CD4-positive, alpha-beta memory T cell (primary cell): ENCODE measurements at regions of chr9 and their contacts with region 1.

Region 1: DNA sequence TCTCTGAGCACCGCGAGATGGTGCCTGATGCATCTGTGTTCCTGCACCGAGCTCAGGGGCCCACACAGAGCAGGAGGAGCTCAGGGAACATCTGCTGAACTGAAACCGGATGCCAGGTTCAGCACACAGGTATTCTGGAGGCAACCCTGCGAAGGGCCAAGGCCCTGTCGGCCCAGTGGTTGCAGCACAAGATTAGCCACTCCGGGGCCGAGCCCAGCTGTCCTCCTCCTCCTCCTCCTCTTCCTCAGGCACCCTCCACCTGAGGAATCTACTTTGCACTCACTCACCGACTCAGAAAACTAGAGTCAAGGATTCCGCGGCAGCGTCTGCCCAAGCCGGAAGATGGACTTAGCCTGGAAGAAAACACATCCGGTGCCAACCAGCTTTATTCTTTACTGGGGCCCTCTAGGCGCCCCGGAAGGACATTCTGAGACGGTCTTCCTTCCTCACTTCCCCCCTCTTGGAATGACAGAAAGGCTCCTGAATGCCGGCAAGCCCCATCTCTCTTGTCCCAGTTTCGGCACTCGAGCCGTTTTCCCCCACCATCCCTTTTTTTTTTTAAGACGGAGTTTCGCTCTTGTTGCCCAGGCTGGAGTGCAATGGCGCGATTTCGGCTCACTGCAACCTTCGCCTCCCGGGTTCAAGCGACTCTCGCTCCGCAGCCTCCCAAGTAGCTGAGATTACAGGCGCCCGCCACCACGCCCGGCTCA is at the start of gene ZBTB6:
- DNase-seq: peak; percentile 77 to 92 (median 80)
- H3K4me3 ChIP-seq: peak within 1 kb of the TSS; percentile 95 to 96
- H3K4me3 Mint-ChIP-seq: peak within 1 kb of the TSS; percentile 93 to 99 (median 98)
- H3K27ac ChIP-seq: peak within 1 kb of the TSS; percentile 86
- H3K27ac Mint-ChIP-seq: peak within 1 kb of the TSS; percentile 89 to 99 (median 99)
- H3K4me1 ChIP-seq: peaks cover 24% of the 10 kb centered on the region
- H3K4me1 Mint-ChIP-seq: peaks cover 21 to 36% (median 26%) of the 10 kb centered on the region in 4 donors
- H3K27me3 ChIP-seq: no peaks in the 10 kb centered on the region
- H3K27me3 Mint-ChIP-seq: no peaks in the 10 kb centered on the region
- total RNA-seq, gene ZBTB6: 20.2 to 20.5 TPM

Region 2: DNA sequence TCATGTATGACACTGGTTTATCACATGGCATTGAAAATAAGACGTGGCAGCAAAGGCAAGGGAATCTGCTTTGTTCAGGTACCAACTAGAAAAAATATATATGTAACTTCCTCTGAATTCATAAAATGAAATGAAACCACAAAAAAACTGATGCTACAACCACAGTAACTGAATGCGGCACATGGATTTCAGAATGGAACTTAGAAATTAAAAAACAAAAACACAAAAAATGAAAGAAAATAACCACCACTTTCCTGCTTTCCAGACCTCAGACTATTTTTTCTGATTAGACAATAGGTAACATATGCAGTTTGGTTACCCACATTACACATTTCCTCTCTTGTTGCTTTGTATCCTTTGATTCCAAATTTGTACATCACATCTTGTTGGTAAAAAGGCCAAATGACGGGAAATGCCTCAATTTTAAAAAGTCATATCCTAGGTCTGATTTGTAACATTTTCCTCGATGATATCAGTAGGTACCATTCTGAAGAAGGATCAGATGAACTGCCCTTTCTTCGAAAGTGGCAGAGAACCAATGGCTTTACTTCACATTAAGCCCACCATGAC is 66.7 kb before region 1 on chr9:
- CTCF ChIA-PET with region 1: no interaction called
- POLR2A ChIA-PET with region 1: no interaction called
- intact Hi-C with region 1: no loop called
- DNase-seq: peak; percentile 27 to 70 (median 56)
- H3K4me3 ChIP-seq: no peak overlapping the region
- H3K4me3 Mint-ChIP-seq: peak overlapping the region in 5 of 8 donors; percentile 18 to 55 (median 27)
- H3K27ac ChIP-seq: peak overlapping the region; percentile 9
- H3K27ac Mint-ChIP-seq: peak overlapping the region; percentile 44 to 95 (median 79)
- H3K4me1 ChIP-seq: peaks cover 21% of the 10 kb centered on the region
- H3K4me1 Mint-ChIP-seq: peaks cover 14 to 29% (median 25%) of the 10 kb centered on the region in 4 donors
- H3K27me3 ChIP-seq: no peaks in the 10 kb centered on the region
- H3K27me3 Mint-ChIP-seq: no peaks in the 10 kb centered on the region

Region 3: DNA sequence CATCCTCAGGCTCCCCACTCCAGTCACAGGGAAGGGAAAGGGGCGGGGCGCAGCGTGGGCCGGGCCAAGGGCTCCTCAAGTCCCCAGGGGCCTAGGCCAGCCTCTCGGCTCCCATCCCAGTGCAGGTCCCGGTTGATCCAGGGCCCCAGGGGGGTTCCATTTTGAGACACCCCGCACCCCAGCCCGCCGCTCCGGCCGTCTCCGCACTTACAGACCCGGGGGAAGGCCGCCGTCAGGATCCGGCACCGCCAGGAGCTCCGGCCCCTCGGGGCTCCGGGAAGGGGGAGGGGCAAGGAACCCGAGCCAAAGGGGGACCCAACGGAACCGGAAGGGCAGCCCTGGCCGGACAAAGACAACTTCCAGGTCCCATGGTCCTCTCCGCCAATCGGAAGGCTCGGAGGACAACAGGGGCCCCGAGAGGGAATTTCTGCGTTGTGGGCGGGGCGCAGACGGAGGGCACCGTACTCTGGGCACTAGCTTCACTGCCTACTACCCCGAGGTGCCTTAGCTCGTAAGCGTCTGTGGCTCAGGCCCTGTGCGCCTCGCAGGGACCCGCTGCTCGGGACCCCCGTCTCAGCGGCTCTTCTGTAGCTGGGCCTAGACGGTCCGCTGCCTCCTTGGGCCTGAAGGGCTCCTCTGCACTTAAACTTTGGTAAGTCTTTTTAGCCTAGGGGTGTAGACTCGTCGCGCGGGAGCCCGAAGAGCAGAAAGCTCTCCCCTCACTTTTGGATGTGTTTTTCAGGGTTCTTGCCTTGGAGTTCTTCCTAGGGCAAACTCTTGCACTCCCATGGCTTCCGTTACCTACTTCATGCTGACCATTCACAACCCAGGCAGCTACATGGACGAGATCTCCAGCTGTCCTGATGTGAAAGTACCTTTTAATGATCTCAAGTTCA is 18.4 kb after region 1 on chr9 and contains the start of gene ZBTB26:
- CTCF ChIA-PET with region 1: interaction called, 6 read pairs
- POLR2A ChIA-PET with region 1: interaction called, 80 read pairs
- intact Hi-C with region 1: loop called (anchors 1 kb)
- DNase-seq: peak; percentile 83 to 93 (median 86)
- H3K4me3 ChIP-seq: peak within 1 kb of the TSS; percentile 84 to 93
- H3K4me3 Mint-ChIP-seq: peak within 1 kb of the TSS in 1 of 8 donors; percentile 99
- H3K27ac ChIP-seq: peak within 1 kb of the TSS; percentile 94
- H3K27ac Mint-ChIP-seq: peak within 1 kb of the TSS in 3 of 7 donors; percentile 95 to 96 (median 95)
- H3K4me1 ChIP-seq: peaks cover 29% of the 10 kb centered on the region
- H3K4me1 Mint-ChIP-seq: peaks cover 11 to 28% (median 18%) of the 10 kb centered on the region in 4 donors
- H3K27me3 ChIP-seq: no peaks in the 10 kb centered on the region
- H3K27me3 Mint-ChIP-seq: no peaks in the 10 kb centered on the region
- total RNA-seq, gene ZBTB26: 10.5 to 10.9 TPM

Region 4: DNA sequence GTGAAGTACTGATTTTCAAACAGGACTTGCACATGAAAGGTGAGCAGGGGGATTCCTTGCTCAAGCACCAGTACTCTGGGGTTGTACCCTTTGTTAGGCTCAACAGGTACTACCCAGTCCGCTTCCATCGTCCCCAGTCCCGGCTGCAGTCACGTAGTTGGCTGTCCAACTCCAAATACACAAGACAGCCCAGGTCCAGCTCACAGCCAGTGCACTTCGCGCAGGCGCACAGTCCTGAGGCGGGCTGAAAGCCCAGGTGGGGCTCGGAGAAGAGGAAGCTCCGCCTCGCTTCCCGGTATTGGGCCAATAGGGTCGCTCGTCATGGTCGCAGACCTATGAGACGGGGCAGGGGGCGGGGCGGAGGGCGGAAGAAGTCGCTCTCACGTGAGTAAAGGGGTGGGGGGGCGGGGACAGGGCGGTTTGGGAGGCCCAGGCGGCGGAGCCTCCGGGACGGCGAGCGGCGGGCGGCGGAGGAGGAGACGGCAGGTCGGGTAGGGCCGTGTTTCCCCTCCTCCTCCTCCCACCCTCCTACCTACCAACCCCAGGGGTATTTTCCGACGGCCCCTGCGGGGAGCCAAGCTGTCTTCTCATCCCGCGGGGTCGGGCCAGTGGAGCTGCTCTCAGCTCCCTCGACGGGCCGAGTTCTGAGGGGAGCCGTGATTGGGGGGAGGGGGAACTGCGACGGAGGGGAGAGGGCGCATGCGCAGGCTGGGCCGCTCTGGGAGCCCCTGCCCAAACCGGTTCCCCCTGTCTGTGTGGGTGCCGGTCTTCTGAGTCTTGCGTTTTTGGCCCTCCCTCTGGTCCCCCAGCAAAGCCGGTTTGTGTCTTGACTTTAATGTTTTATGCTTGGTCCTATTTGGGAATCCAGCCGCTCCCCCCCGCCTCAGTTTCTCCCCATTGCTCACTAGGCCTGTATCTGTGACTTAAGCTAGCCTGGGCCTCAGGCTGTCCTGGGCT is 27.8 kb after region 1 on chr9 and contains the start of gene RABGAP1:
- CTCF ChIA-PET with region 1: interaction called, 3 read pairs
- POLR2A ChIA-PET with region 1: interaction called, 47 read pairs
- intact Hi-C with region 1: loop called (anchors 1 kb)
- DNase-seq: peak; percentile 94 to 99 (median 96)
- H3K4me3 ChIP-seq: peak within 1 kb of the TSS; percentile 80 to 88
- H3K4me3 Mint-ChIP-seq: peak within 1 kb of the TSS; percentile 89 to 98 (median 94)
- H3K27ac ChIP-seq: peak within 1 kb of the TSS; percentile 86
- H3K27ac Mint-ChIP-seq: peak within 1 kb of the TSS; percentile 91 to 98 (median 95)
- H3K4me1 ChIP-seq: peaks cover 26% of the 10 kb centered on the region
- H3K4me1 Mint-ChIP-seq: peaks cover 29 to 46% (median 33%) of the 10 kb centered on the region in 4 donors
- H3K27me3 ChIP-seq: no peaks in the 10 kb centered on the region
- H3K27me3 Mint-ChIP-seq: no peaks in the 10 kb centered on the region
- total RNA-seq, gene RABGAP1: 43.2 to 43.6 TPM

Region 5: GRCh38 chr9:123523001-123523400 is 609.9 kb after region 1 on chr9:
- CTCF ChIA-PET with region 1: no interaction called
- POLR2A ChIA-PET with region 1: no interaction called
- intact Hi-C with region 1: no loop called
- DNase-seq: no peak
- H3K4me3 ChIP-seq: no peak overlapping the region
- H3K4me3 Mint-ChIP-seq: no peak overlapping the region
- H3K27ac ChIP-seq: no peak overlapping the region
- H3K27ac Mint-ChIP-seq: no peak overlapping the region
- H3K4me1 ChIP-seq: no peaks in the 10 kb centered on the region
- H3K4me1 Mint-ChIP-seq: no peaks in the 10 kb centered on the region
- H3K27me3 ChIP-seq: no peaks in the 10 kb centered on the region
- H3K27me3 Mint-ChIP-seq: no peaks in the 10 kb centered on the region